ENCODE measurements at regions of chr2 and their contacts with region 1.

Region 1: GRCh38 chr2:88055371-88056128 is at the start of gene KRCC1:
- DNase-seq: peak; percentile 92 to 98 (median 96)
- H3K4me3 ChIP-seq: peak within 1 kb of the TSS; percentile 60 to 98 (median 87)
- H3K27ac ChIP-seq: peak within 1 kb of the TSS; percentile 65 to 99 (median 94)
- H3K27me3 ChIP-seq: no peaks in the 10 kb centered on the region
- CTCF ChIP-seq: peak in 51 of 56 donors; percentile 8 to 68 (median 44)
- total RNA-seq, gene KRCC1: 7.6 to 19.7 (median 12.6) TPM

Region 2: GRCh38 chr2:88003074-88003755 is 52.3 kb before region 1 on chr2:
- intact Hi-C with region 1: loop called in 1 of 2 experiments (anchors 5 kb)
- DNase-seq: no peak
- H3K4me3 ChIP-seq: peak overlapping the region in 1 of 59 donors; percentile 21
- H3K27ac ChIP-seq: peak overlapping the region in 1 of 59 donors; percentile 31
- H3K27me3 ChIP-seq: no peaks in the 10 kb centered on the region
- CTCF ChIP-seq: no peak

Region 3: GRCh38 chr2:88016086-88016959 is 39.2 kb before region 1 on chr2 and contains the start of gene RNU2-63P:
- intact Hi-C with region 1: loop called (anchors 5 kb)
- DNase-seq: peak; percentile 51 to 76 (median 65)
- H3K4me3 ChIP-seq: peak within 1 kb of the TSS; percentile 43 to 80 (median 66)
- H3K27ac ChIP-seq: peak within 1 kb of the TSS; percentile 5 to 93 (median 82)
- H3K27me3 ChIP-seq: no peaks in the 10 kb centered on the region
- CTCF ChIP-seq: peak in 9 of 56 donors; percentile 3 to 40 (median 10)
- total RNA-seq, gene RNU2-63P: 4.4 to 11.0 (median 5.2) TPM in 8 of 120 experiments, not detected in the others

Region 4: DNA sequence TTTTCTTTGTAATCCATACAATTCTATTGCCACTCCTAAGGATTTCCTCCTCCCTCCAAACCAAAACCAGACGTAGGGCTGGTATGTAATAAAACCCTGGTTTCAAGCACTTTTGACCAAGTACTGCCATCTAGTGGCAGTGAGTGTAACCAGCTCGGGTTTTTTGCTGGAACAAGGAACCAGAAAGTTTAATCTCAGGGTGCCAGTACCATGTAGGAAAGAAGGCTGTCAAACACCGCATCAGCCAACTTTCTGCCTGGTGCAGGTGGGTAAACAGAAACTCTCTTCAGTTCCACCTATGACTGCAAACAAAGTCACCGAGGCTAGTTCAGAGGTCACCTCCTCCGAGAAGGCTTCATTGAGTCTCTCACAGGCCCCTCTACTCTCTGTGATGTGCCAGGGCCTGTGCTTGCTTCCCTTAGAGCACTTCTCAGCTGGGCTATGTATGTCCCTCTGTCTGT is 104.4 kb after region 1 on chr2:
- intact Hi-C with region 1: loop called in 1 of 2 experiments (anchors 1 kb)
- DNase-seq: peak in 7 of 10 donors; percentile 36 to 82 (median 63)
- H3K4me3 ChIP-seq: no peak overlapping the region
- H3K27ac ChIP-seq: peak overlapping the region in 2 of 59 donors; percentile 11 to 38
- H3K27me3 ChIP-seq: no peaks in the 10 kb centered on the region
- CTCF ChIP-seq: peak; percentile 79 to 98 (median 93)

Region 5: GRCh38 chr2:88187038-88187676 is 131.6 kb after region 1 on chr2:
- intact Hi-C with region 1: loop called in 1 of 2 experiments (anchors 2 kb)
- DNase-seq: peak; percentile 27 to 85 (median 80)
- H3K4me3 ChIP-seq: no peak overlapping the region
- H3K27ac ChIP-seq: no peak overlapping the region
- H3K27me3 ChIP-seq: peaks cover 0 to 10% (median 0%) of the 10 kb centered on the region in 45 donors
- CTCF ChIP-seq: peak; percentile 26 to 87 (median 77)